Vagina (tissue), 2 donors: ENCODE measurements at regions of chr15 and their contacts with region 1.

Region 1: DNA sequence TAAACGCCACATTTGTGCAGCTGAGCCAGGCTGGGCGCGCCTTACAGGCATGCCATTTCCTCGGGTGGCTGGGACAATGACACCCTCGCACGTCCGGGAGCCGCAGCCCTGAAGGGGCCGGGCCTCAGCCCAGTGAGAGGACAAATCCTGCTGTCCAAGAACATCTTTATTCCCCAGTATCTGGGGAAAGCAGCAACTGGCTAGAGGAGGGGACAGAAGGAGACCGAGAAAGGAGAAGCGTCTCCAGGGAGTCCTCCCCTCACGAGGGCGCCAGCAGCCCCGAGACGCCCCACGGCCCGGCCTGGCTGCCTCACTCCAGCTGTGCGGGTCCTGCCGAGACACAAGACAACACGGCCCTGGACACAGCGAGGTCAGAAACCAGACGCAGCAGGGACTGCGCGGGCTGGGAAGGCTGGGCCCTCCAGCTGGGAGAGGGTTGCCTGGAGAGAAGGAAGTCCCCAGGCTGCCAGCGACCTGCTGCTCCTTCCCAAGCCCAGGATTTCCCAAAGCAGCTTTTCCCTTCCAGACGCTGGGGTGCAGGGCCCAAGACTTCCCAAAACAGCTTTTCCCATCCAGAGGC is 130.2 kb downstream of the CHSY1 start:
- DNase-seq: no peak
- H3K4me3 ChIP-seq: peak overlapping the region; percentile 25 to 34
- H3K27ac ChIP-seq: peak overlapping the region; percentile 85
- H3K4me1 ChIP-seq: peaks cover 27% of the 10 kb centered on the region
- H3K27me3 ChIP-seq: no peaks in the 10 kb centered on the region
- CTCF ChIP-seq: no peak
- POLR2A ChIP-seq: no peak

Region 2: GRCh38 chr15:101167753-101168463 is 46.3 kb after region 1 on chr15:
- intact Hi-C with region 1: loop called (anchors 5 kb)
- DNase-seq: no peak
- H3K4me3 ChIP-seq: peak overlapping the region; percentile 8 to 36
- H3K27ac ChIP-seq: peak overlapping the region; percentile 82
- H3K4me1 ChIP-seq: peaks cover 65% of the 10 kb centered on the region
- H3K27me3 ChIP-seq: no peaks in the 10 kb centered on the region
- CTCF ChIP-seq: no peak
- POLR2A ChIP-seq: no peak